ENCODE measurements at regions of chr5 and their contacts with region 1.

Region 1: GRCh38 chr5:5270958-5271605 is 131.0 kb downstream of the ADAMTS16 start:
- DNase-seq: peak; percentile 97 to 100
- H3K4me3 ChIP-seq: peak overlapping the region; percentile 52
- H3K27ac ChIP-seq: peak overlapping the region; percentile 90
- H3K4me1 ChIP-seq: peaks cover 33% of the 10 kb centered on the region
- H3K27me3 ChIP-seq: no peaks in the 10 kb centered on the region
- CTCF ChIP-seq: no peak

Region 2: DNA sequence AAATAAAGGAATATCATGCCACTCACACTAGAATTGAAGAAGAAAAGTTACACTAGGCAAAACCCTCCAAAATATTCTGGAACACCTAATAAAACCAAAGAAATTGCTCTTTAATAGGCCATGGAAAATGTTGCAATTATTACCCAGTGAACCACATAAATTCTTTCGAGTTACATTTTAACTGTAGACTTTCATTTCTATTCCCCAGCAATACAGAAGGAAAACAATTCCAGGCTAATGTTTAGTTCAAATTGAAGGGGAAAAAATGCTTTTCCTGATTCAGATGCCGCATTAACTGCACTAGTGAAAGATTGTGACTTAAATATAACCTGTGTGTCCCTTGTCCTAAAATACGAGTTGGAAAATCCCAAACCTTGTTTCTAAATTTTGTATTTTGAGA is 570.2 kb before region 1 on chr5:
- CTCF ChIA-PET with region 1: no interaction called
- POLR2A ChIA-PET with region 1: no interaction called
- intact Hi-C with region 1: no loop called
- DNase-seq: peak in 1 of 2 experiments; percentile 34
- H3K4me3 ChIP-seq: no peak overlapping the region
- H3K27ac ChIP-seq: no peak overlapping the region
- H3K4me1 ChIP-seq: no peaks in the 10 kb centered on the region
- H3K27me3 ChIP-seq: peaks cover 26% of the 10 kb centered on the region; the same call in 1 of the 2 replicates
- CTCF ChIP-seq: no peak

Region 3: GRCh38 chr5:5288201-5288600 is 17.1 kb after region 1 on chr5:
- CTCF ChIA-PET with region 1: interaction called, 3 read pairs
- POLR2A ChIA-PET with region 1: interaction called, 3 read pairs
- intact Hi-C with region 1: loop called (anchors 1 kb)
- DNase-seq: peak; percentile 55 to 88
- H3K4me3 ChIP-seq: no peak overlapping the region
- H3K27ac ChIP-seq: peak overlapping the region; percentile 84
- H3K4me1 ChIP-seq: peaks cover 29% of the 10 kb centered on the region
- H3K27me3 ChIP-seq: no peaks in the 10 kb centered on the region
- CTCF ChIP-seq: no peak

Region 4: GRCh38 chr5:5304361-5305020 is 33.4 kb after region 1 on chr5:
- CTCF ChIA-PET with region 1: no interaction called
- POLR2A ChIA-PET with region 1: no interaction called
- intact Hi-C with region 1: loop called (anchors 1 kb)
- DNase-seq: peak in 1 of 2 experiments; percentile 68
- H3K4me3 ChIP-seq: no peak overlapping the region
- H3K27ac ChIP-seq: no peak overlapping the region
- H3K4me1 ChIP-seq: no peaks in the 10 kb centered on the region
- H3K27me3 ChIP-seq: no peaks in the 10 kb centered on the region
- CTCF ChIP-seq: no peak

Region 5: GRCh38 chr5:5340206-5340729 is 69.2 kb after region 1 on chr5:
- CTCF ChIA-PET with region 1: interaction called, 4 read pairs
- POLR2A ChIA-PET with region 1: interaction called, 5 read pairs
- intact Hi-C with region 1: loop called (anchors 1 kb)
- DNase-seq: peak; percentile 61 to 95
- H3K4me3 ChIP-seq: no peak overlapping the region
- H3K27ac ChIP-seq: no peak overlapping the region
- H3K4me1 ChIP-seq: peaks cover 25% of the 10 kb centered on the region
- H3K27me3 ChIP-seq: no peaks in the 10 kb centered on the region
- CTCF ChIP-seq: peak; percentile 55; the same call in 1 of the 2 replicates

Region 6: DNA sequence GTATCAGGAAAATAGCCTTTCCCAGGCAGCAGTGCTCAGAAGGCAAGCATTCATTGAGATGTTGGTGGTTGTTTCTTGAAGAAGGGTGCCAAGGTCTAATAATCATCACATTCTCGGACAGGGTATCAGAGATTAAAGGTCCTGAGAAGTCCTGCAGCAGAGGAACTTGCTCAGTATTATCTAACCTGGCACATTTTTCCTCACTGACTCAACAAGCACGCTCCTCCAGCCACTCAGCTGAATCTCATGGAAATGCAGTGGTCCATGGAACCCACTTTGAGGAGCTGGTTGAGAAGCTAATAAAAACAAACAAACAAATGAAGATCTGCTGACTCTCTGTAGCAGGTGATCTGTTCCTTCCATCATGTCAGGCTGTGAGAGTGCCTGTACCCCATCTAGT is 116.1 kb after region 1 on chr5:
- CTCF ChIA-PET with region 1: no interaction called
- POLR2A ChIA-PET with region 1: no interaction called
- intact Hi-C with region 1: loop called (anchors 5 kb)
- DNase-seq: no peak
- H3K4me3 ChIP-seq: no peak overlapping the region
- H3K27ac ChIP-seq: no peak overlapping the region
- H3K4me1 ChIP-seq: peaks cover 8% of the 10 kb centered on the region
- H3K27me3 ChIP-seq: 0 out of 2 replicates have a peak, but pooled peaks cover 11% of the 10 kb centered on the region
- CTCF ChIP-seq: no peak

Region 7: DNA sequence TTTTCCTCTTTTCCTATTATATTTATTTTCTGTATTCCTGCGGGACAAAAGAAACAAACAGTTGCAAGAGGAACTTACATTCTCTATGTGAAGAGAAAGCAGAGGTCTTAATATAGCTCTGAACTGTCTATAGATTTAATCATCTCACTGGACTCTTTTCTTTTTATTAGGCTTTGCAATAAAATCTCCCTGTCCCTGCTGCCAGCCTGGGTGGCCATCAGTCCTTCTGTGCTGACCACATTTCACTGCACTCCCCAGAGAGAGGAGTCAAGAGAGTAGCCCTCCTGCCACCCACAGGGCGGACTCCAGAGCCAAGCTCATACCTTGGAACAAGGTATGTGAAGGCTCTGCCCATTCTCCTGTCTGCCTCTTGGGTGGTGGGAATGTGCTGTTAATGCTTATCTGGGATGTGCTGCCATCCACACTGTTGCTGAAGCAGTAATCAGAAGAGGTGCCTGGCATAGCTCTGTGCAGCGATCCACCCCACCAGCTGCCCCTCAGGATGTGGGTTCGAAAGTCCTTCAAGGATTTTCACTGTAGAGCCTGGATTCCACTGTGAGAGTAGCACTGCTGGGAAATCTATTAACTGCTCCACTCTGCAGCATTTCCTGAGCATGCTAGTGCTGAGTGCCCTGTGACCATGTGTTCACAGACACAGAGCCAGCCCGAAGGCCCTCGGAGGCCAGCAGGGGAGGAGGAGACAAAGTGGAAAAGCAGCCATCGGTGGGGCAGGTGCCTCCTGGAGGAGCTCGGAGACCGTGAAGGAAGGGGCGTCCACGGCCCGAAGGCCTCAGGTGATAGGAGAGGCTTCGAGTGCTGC is 772.6 kb after region 1 on chr5:
- CTCF ChIA-PET with region 1: no interaction called
- POLR2A ChIA-PET with region 1: no interaction called
- intact Hi-C with region 1: no loop called
- DNase-seq: no peak
- H3K4me3 ChIP-seq: no peak overlapping the region
- H3K27ac ChIP-seq: no peak overlapping the region
- H3K4me1 ChIP-seq: no peaks in the 10 kb centered on the region
- H3K27me3 ChIP-seq: peaks cover 55% of the 10 kb centered on the region
- CTCF ChIP-seq: no peak